A549 (cell line): ENCODE measurements at regions of chr10 and their contacts with region 1.

Region 1: GRCh38 chr10:95246579-95247051 is 44.2 kb downstream of the PDLIM1 start:
- DNase-seq: peak; percentile 48 to 80
- ATAC-seq: peak; percentile 66 to 82
- H3K4me3 ChIP-seq: no peak overlapping the region
- H3K27ac ChIP-seq: peak overlapping the region; percentile 20 to 33; a peak in 4 of 6 replicates
- H3K4me1 ChIP-seq: peaks cover 28% of the 10 kb centered on the region
- CTCF ChIP-seq: peak; percentile 92
- EP300 ChIP-seq: no peak
- POLR2A ChIP-seq: no peak
- RAD21 ChIP-seq: peak; percentile 94 to 96

Region 2: GRCh38 chr10:94630017-94630688 is 616.5 kb before region 1 on chr10:
- CTCF ChIA-PET with region 1: interaction called, 12 read pairs
- POLR2A ChIA-PET with region 1: no interaction called
- DNase-seq: peak; percentile 36 to 43
- ATAC-seq: peak; percentile 34 to 58; a peak in 3 of 6 replicates
- H3K4me3 ChIP-seq: no peak overlapping the region
- H3K27ac ChIP-seq: peak overlapping the region; percentile 61 to 75
- H3K4me1 ChIP-seq: peaks cover 6% of the 10 kb centered on the region; the same call in 1 of the 3 replicates
- CTCF ChIP-seq: peak; percentile 85
- EP300 ChIP-seq: no peak
- POLR2A ChIP-seq: no peak
- RAD21 ChIP-seq: peak; percentile 84 to 95

Region 3: GRCh38 chr10:95201736-95202135 is 44.9 kb before region 1 on chr10:
- CTCF ChIA-PET with region 1: interaction called, 61 read pairs
- POLR2A ChIA-PET with region 1: no interaction called
- DNase-seq: peak; percentile 60 to 71
- ATAC-seq: peak; percentile 95 to 99
- H3K4me3 ChIP-seq: no peak overlapping the region
- H3K27ac ChIP-seq: peak overlapping the region in 1 of 2 experiments; percentile 30; a peak in 1 of 6 replicates
- H3K4me1 ChIP-seq: no peaks in the 10 kb centered on the region
- CTCF ChIP-seq: peak; percentile 52
- EP300 ChIP-seq: no peak
- POLR2A ChIP-seq: no peak
- RAD21 ChIP-seq: peak; percentile 73 to 91

Region 4: DNA sequence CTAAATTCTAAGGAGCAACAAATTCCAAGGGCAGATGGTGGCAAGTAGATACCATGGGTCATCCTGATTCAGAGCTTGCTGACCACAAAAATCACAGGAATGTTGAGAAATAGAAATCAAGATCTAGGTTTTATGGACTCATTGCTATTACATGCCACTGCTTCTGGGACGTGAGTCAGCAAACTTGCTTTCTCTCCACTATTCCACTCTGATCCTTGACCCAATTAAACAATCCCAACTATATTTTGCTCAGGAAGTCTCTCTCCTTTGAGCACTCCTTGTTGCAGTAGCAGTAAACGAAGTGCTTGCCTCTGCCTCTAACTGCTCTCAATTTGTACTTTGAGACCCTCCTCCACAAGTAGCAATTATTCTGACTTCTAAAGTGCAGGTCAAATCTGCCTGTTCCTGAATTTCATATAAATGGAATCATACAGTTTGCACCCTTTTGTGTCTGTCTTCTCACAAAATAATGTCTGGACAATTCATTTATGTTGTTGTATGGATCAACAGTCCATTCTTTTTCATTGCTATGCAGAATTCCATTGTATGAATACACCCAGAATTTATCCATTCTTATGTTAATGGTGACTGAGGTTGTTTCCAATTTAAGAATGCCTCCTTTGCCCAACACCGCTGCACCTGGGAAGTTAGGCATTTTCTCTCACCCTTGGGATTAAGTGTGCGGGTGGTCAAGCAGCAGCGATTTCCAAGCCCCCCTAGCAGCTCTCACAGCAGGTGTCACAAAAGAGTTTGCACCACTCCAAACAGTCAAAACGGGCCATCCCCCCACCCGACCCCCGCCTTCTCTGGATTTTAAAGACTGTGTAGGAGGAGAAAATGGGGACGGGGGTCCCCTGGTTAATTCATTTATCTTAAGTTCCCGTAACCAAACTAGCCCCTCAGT is 16.6 kb before region 1 on chr10:
- CTCF ChIA-PET with region 1: interaction called, 48 read pairs
- POLR2A ChIA-PET with region 1: no interaction called
- DNase-seq: peak; percentile 60 to 91
- ATAC-seq: peak; percentile 96 to 97
- H3K4me3 ChIP-seq: no peak overlapping the region; the same call in 2 of the 3 replicates
- H3K27ac ChIP-seq: peak overlapping the region; percentile 93
- H3K4me1 ChIP-seq: peaks cover 39% of the 10 kb centered on the region
- CTCF ChIP-seq: no peak
- EP300 ChIP-seq: peak; percentile 56 to 80; a peak in 3 of 5 replicates
- POLR2A ChIP-seq: no peak
- RAD21 ChIP-seq: peak; percentile 3 to 26; a peak in 1 of 5 replicates

Region 5: DNA sequence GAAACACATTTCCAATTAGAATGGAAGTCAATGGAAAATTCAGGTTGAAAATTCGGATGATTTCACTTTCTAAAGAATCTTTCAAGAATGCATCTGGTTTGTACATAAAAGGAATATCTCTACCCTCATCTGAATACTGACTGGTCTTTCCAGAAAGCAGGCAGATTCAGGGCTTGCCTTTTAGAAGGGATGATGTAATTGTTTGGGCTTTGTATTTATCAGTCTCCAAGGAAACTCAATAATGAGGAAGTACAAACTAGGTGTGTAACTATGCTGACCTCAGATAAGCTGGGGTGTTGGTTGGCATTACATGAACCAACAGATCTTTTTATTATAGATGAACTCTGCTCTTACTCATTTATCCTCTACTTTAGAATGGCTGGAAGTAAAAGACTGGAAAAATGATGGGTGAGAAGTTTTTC is 20.1 kb after region 1 on chr10:
- CTCF ChIA-PET with region 1: interaction called, 30 read pairs
- POLR2A ChIA-PET with region 1: no interaction called
- DNase-seq: peak; percentile 89 to 93
- ATAC-seq: peak; percentile 88 to 89
- H3K4me3 ChIP-seq: no peak overlapping the region
- H3K27ac ChIP-seq: peak overlapping the region; percentile 76 to 82
- H3K4me1 ChIP-seq: peaks cover 67% of the 10 kb centered on the region
- CTCF ChIP-seq: no peak
- EP300 ChIP-seq: no peak
- POLR2A ChIP-seq: no peak
- RAD21 ChIP-seq: no peak

Region 6: GRCh38 chr10:95308389-95309302 is 62.0 kb after region 1 on chr10:
- CTCF ChIA-PET with region 1: interaction called, 16 read pairs
- POLR2A ChIA-PET with region 1: no interaction called
- DNase-seq: peak; percentile 62 to 90
- ATAC-seq: peak; percentile 86 to 94
- H3K4me3 ChIP-seq: no peak overlapping the region
- H3K27ac ChIP-seq: peak overlapping the region; percentile 70 to 84
- H3K4me1 ChIP-seq: peaks cover 62% of the 10 kb centered on the region
- CTCF ChIP-seq: no peak
- EP300 ChIP-seq: peak in 1 of 2 experiments; percentile 42; a peak in 1 of 5 replicates
- POLR2A ChIP-seq: no peak
- RAD21 ChIP-seq: peak; percentile 27 to 30; a peak in 3 of 5 replicates

Region 7: DNA sequence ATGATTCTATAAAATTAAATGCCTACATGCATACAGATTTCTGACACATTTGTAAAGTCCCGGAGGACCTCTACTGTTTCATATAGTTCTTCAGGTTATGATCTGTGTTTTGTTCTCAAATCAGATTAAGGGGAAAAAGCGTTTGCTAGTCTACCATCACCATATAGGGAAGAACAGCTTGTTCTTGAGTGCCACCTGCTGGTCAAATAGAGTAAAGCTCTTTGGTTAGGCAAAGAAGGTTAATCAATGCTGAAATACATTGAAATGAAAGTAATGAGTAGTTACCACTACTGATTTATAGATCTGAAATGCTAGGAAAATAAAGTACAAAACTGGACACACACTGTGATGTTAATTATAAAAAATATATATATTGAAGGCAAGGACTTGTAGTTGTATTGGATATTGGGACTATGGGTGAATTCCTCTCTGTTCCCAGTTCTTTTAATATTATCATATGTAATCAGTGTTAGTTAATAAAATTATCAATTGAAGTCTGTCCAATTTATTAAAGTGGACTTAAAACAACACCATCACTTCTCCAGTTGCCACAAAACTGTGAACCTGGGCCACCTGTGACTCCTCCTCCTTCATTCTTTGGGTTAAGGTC is 116.8 kb after region 1 on chr10:
- CTCF ChIA-PET with region 1: interaction called, 637 read pairs
- POLR2A ChIA-PET with region 1: interaction called, 4 read pairs
- DNase-seq: peak; percentile 70 to 76
- ATAC-seq: peak; percentile 62 to 87; a peak in 3 of 6 replicates
- H3K4me3 ChIP-seq: no peak overlapping the region
- H3K27ac ChIP-seq: peak overlapping the region; percentile 9 to 23; a peak in 1 of 6 replicates
- H3K4me1 ChIP-seq: peaks cover 14% of the 10 kb centered on the region
- CTCF ChIP-seq: peak; percentile 95
- EP300 ChIP-seq: no peak
- POLR2A ChIP-seq: no peak
- RAD21 ChIP-seq: peak; percentile 98 to 99

Region 8: GRCh38 chr10:96416643-96417042 is 1170.0 kb after region 1 on chr10:
- CTCF ChIA-PET with region 1: no interaction called
- POLR2A ChIA-PET with region 1: no interaction called
- DNase-seq: no peak
- ATAC-seq: no peak
- H3K4me3 ChIP-seq: no peak overlapping the region
- H3K27ac ChIP-seq: no peak overlapping the region
- H3K4me1 ChIP-seq: no peaks in the 10 kb centered on the region
- CTCF ChIP-seq: no peak
- EP300 ChIP-seq: no peak
- POLR2A ChIP-seq: no peak
- RAD21 ChIP-seq: no peak